Adrenal gland (tissue), 19 donors: ENCODE measurements at regions of chr1 and their contacts with region 1.

Region 1: GRCh38 chr1:209354111-209354839 is 229.2 kb upstream of the CAMK1G start:
- DNase-seq: peak; percentile 81 to 95 (median 88)
- H3K4me3 ChIP-seq: no peak overlapping the region
- H3K27ac ChIP-seq: no peak overlapping the region
- H3K4me1 ChIP-seq: no peaks in the 10 kb centered on the region
- H3K27me3 ChIP-seq: no peaks in the 10 kb centered on the region
- CTCF ChIP-seq: peak; percentile 67 to 86 (median 76)
- POLR2A ChIP-seq: no peak

Region 2: GRCh38 chr1:209207701-209208286 is 146.5 kb before region 1 on chr1:
- intact Hi-C with region 1: loop called (anchors 5 to 10 kb)
- DNase-seq: peak; percentile 33 to 83 (median 64)
- H3K4me3 ChIP-seq: peak overlapping the region in 1 of 4 donors; percentile 11
- H3K27ac ChIP-seq: no peak overlapping the region
- H3K4me1 ChIP-seq: peaks cover 0 to 7% of the 10 kb centered on the region in 2 donors
- H3K27me3 ChIP-seq: peaks cover 18% of the 10 kb centered on the region
- CTCF ChIP-seq: peak; percentile 42 to 70 (median 54)
- POLR2A ChIP-seq: no peak

Region 3: GRCh38 chr1:209248649-209249279 is 105.5 kb before region 1 on chr1:
- intact Hi-C with region 1: loop called in 1 of 2 experiments (anchors 10 kb)
- DNase-seq: peak; percentile 23 to 85 (median 56)
- H3K4me3 ChIP-seq: no peak overlapping the region
- H3K27ac ChIP-seq: no peak overlapping the region
- H3K4me1 ChIP-seq: no peaks in the 10 kb centered on the region
- H3K27me3 ChIP-seq: no peaks in the 10 kb centered on the region
- CTCF ChIP-seq: peak; percentile 59 to 95 (median 84)
- POLR2A ChIP-seq: no peak